Activated CD4-positive, alpha-beta memory T cell treated with anti-CD3 and anti-CD28 coated beads for 36 hours (primary cell): ENCODE measurements at regions of chr9 and their contacts with region 1.

Region 1: GRCh38 chr9:136109351-136110081 is 9.2 kb downstream of the TMEM250 start:
- DNase-seq: peak; percentile 97
- H3K4me3 Mint-ChIP-seq: peak overlapping the region; percentile 80
- H3K27ac Mint-ChIP-seq: peak overlapping the region; percentile 96
- H3K4me1 Mint-ChIP-seq: peaks cover 75% of the 10 kb centered on the region
- H3K27me3 Mint-ChIP-seq: no peaks in the 10 kb centered on the region

Region 2: DNA sequence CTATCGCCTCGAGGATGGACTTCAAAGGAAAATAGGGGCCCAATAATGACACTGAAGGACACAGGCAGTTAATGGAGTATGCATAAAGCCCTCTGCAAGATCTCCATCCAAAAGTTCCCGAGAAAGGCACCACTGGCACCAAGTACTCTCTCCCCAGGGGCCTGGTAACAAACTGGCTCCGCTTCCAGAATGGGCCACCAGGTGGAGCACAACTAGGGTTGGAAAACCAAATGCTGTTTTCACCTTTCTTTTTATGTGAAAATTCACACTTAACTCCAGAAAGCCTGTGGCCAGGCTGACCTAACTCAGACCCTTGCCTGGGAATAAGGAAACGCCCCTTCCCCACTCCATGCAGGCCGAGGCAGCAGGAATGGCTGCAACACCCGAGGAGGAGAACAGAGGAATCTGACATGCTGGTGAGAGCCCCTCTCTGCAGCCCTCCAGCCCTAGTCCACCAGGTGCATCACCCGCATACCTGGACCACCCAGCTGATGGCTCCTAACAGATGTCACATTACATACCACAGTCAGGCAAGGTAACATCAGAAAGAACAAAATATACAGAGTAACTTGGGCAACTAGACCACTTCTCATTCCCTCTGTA is 245.0 kb before region 1 on chr9:
- CTCF ChIA-PET with region 1: no interaction called
- POLR2A ChIA-PET with region 1: no interaction called
- intact Hi-C with region 1: loop called (anchors 5 kb)
- DNase-seq: peak; percentile 81
- H3K4me3 Mint-ChIP-seq: no peak overlapping the region
- H3K27ac Mint-ChIP-seq: no peak overlapping the region
- H3K4me1 Mint-ChIP-seq: peaks cover 51% of the 10 kb centered on the region
- H3K27me3 Mint-ChIP-seq: no peaks in the 10 kb centered on the region

Region 3: GRCh38 chr9:135925496-135926133 is 183.9 kb before region 1 on chr9:
- CTCF ChIA-PET with region 1: no interaction called
- POLR2A ChIA-PET with region 1: no interaction called
- intact Hi-C with region 1: no loop called
- DNase-seq: peak; percentile 95
- H3K4me3 Mint-ChIP-seq: peak overlapping the region; percentile 58
- H3K27ac Mint-ChIP-seq: peak overlapping the region; percentile 93
- H3K4me1 Mint-ChIP-seq: peaks cover 34% of the 10 kb centered on the region
- H3K27me3 Mint-ChIP-seq: no peaks in the 10 kb centered on the region

Region 4: DNA sequence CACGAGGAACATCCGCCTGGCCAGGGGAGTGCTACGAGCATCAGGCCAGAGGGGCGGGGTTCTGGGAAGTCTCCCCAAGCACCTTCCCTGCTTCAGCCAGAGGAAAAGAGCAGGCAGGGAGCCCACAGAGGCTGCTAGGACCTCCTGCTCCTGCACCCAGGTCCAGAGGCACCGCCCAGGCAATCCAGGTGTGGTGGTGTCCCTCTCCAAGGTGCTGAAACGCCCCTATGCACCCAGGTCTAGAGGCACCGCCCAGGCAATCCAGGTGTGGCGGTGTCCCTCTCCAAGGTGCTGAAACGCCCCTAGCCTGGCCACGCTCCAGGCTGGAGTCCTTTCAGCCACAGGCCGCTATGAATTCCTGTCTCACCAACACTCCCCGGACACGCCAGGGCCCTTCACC is 137.6 kb before region 1 on chr9:
- CTCF ChIA-PET with region 1: interaction called, 18 read pairs
- POLR2A ChIA-PET with region 1: no interaction called
- intact Hi-C with region 1: no loop called
- DNase-seq: peak; percentile 60
- H3K4me3 Mint-ChIP-seq: no peak overlapping the region
- H3K27ac Mint-ChIP-seq: no peak overlapping the region
- H3K4me1 Mint-ChIP-seq: peaks cover 5% of the 10 kb centered on the region
- H3K27me3 Mint-ChIP-seq: peaks cover 2% of the 10 kb centered on the region

Region 5: DNA sequence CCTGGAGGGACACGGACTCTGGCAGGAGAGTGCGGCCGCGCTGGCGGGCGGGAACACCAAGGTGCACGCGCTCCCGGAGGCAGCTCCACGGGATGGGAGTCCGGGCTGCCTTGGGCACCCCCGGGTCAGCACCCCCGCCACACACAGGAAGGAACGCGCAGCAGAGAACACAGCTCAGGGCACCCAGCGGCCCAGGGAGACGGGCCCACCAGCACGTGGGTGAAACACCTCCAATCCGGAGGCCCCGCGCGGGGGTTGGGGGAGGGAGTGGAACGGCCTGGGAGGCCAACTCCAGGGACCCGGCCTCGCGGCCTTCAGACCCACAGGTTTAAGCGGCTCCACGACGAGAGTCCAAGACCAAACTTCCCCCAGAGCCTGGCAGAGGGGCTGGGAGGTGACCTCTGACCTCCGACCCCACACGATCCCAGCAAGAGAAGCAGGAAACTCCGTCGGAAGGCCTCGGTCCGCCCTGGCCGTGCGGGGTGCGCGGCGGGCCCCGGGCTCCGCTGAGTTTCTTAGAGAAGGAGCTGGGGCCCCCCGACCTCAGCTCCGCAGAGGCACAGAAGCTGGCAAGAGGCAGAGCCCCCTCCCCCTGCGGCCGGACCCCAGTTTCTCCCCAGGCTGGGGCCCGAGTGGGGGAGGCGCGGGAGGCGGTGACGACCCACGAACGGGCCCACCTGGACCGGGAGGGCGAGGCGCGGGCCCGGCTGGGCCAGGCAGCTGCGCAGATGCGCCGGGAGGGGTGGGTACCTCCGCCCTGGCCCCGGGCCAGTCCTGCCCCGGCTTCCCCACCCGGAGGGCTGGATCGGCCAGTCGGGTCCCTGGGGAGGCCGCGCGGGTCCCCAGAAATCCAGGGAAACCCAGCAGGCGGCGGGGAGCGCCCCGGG is 15.3 kb before region 1 on chr9:
- CTCF ChIA-PET with region 1: interaction called, 10 read pairs
- POLR2A ChIA-PET with region 1: interaction called, 19 read pairs
- intact Hi-C with region 1: loop called (anchors 2 kb)
- DNase-seq: peak; percentile 77
- H3K4me3 Mint-ChIP-seq: peak overlapping the region; percentile 76
- H3K27ac Mint-ChIP-seq: peak overlapping the region; percentile 45
- H3K4me1 Mint-ChIP-seq: peaks cover 24% of the 10 kb centered on the region
- H3K27me3 Mint-ChIP-seq: no peaks in the 10 kb centered on the region